ENCODE measurements at regions of chr1 and their contacts with region 1.

Region 1: GRCh38 chr1:172322219-172323061 is 98.0 kb upstream of the C1orf105 start:
- DNase-seq: peak; percentile 72
- H3K4me3 ChIP-seq: peak overlapping the region; percentile 37
- CTCF ChIP-seq: no peak

Region 2: DNA sequence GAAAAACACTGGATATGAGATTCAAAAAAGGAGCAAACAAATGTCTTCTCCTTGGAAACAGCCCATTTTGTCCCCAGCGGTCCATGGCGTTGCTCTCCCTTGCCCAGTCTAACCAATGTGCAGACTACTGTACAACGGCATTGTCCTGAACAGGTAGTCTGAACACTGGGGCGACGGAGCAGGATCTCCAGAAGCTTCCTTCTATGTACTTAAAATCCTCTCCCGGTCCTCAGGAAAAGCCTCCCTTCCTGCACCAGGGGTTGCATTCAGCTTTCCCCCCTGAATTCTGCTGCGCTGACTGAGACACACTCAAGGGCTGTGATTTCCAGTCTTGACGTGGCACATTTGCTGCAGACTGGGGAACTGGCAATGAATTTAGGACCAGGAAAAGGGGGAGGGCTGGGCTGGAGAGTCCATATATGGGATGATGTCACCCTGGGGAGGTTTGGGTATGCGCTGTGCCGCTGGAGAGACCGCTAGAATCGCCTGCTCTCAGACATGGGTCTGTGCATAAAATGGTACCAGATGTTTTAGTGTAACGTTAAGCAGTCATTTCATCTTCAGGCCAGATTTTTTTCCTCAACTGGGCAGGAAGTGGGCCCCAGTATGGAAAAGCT is 177.9 kb before region 1 on chr1:
- CTCF ChIA-PET with region 1: no interaction called
- POLR2A ChIA-PET with region 1: interaction called, 18 read pairs
- DNase-seq: peak; percentile 97
- H3K4me3 ChIP-seq: peak overlapping the region; percentile 80
- CTCF ChIP-seq: no peak

Region 3: DNA sequence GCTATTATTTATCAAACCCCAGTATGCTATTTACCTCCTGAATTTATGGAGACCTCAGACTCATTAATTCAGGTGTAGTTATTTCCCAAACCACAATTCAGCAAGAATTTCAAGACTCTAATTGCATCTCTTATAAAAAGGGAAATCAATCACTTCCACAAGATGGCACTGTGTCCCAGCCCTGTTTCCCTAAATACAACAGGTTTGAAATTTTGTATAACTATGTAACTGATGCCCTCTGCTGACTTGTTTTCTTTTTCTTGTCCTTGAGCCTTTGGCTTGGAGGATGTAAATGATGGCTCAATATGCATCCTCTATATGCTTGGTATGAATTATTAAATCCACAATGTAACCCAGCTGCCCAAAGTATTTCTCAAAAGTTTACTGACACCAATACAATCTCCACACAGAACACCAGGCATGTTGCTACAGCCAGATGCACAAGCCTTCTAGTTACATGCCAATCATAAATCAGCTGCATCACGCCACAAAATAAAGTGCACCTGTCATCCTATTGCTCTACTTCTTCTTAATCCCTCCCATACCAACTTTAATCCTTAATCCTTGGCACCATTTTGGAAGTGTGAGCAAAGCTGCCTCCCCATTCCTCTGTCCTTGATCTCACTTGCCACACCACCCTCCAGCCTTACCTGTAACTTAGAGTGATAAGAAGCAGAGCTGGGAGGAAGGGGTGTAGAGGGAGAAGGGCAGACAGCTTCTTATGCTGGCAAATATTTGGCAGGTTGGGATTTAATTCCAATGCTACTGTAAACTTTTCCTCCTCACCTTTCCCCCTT is 107.1 kb after region 1 on chr1:
- CTCF ChIA-PET with region 1: no interaction called
- POLR2A ChIA-PET with region 1: no interaction called
- DNase-seq: no peak
- H3K4me3 ChIP-seq: no peak overlapping the region
- CTCF ChIP-seq: peak; percentile 59

Measured in AG04449 (cell line).